ENCODE measurements at regions of chr2 and their contacts with region 1.

Region 1: GRCh38 chr2:105358593-105358992 is 21.3 kb downstream of the C2orf49 start:
- DNase-seq: no peak
- H3K4me3 ChIP-seq: no peak overlapping the region
- H3K27ac ChIP-seq: no peak overlapping the region
- H3K4me1 ChIP-seq: no peaks in the 10 kb centered on the region
- H3K27me3 ChIP-seq: no peaks in the 10 kb centered on the region
- CTCF ChIP-seq: no peak
- EP300 ChIP-seq: no peak
- POLR2A ChIP-seq: no peak
- RAD21 ChIP-seq: no peak

Region 2: DNA sequence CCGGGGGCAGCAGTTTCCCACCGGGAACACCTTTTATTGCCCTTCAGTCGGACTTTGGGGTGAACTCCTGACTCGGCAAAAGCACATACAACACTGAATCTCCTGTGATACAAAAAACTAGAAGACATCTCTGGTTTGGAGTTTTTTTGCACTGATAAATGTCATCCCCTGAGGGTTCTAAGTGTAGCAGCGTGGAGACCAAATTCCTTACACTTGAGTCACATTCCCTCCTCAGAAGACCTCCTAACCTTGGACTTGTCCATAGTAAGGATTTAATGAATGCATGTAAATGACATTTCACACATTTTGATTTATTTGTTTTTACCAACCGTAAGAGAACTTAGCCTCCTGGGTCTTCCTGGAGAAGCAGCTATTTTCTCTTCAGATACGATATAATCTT is 171.1 kb before region 1 on chr2:
- CTCF ChIA-PET with region 1: no interaction called
- POLR2A ChIA-PET with region 1: no interaction called
- DNase-seq: no peak
- H3K4me3 ChIP-seq: no peak overlapping the region
- H3K27ac ChIP-seq: no peak overlapping the region
- H3K4me1 ChIP-seq: no peaks in the 10 kb centered on the region; a peak in 1 of 7 replicates
- H3K27me3 ChIP-seq: no peaks in the 10 kb centered on the region; a peak in 1 of 7 replicates
- CTCF ChIP-seq: no peak
- EP300 ChIP-seq: no peak
- POLR2A ChIP-seq: no peak
- RAD21 ChIP-seq: no peak

Region 3: DNA sequence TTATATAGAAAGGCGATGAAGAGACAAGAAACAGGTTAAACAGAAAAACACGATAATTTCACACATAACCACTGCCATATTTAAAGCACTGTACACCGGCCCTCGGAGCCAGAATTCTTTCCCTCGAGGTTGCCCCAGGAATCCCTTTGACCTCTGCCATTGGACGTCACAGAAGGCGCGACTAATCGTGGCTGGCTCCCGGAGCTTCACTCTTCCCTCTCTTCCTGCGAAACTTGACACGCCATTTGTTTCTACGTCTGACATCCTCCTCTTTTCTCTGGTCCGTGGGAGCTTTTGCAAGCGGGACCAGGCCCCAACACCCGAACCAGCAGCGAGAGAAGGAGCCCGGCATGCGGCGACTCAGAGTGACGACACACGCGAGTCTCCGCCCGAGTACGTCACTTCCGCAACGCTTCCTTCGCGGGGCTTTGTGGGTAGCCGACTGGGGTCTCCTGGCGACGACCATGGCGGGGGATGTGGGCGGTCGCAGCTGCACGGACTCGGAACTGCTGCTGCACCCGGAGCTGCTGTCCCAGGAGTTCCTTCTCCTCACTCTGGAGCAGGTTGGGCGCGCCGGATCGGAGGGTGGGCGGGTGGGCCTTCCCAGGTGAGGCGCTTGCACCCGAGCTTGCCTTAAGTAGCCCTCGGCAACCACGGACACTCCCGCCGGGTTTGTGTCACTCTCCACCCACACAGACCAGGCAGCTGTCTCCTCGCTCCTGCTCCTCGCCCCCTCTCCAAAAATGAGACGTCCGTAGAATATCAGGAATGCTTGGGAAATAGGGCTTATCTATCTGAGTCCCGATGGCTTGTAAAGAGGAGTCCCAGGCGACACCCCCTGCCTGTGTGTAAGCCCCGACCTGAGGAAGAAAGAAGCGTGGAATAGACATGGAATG is 21.2 kb before region 1 on chr2 and contains the start of gene C2orf49:
- CTCF ChIA-PET with region 1: no interaction called
- POLR2A ChIA-PET with region 1: interaction called, 11 read pairs
- DNase-seq: peak; percentile 41 to 95
- H3K4me3 ChIP-seq: peak within 1 kb of the TSS; percentile 82 to 99 (median 96)
- H3K27ac ChIP-seq: peak within 1 kb of the TSS; percentile 100
- H3K4me1 ChIP-seq: peaks cover 0 to 5% (median 0%) of the 10 kb centered on the region in 4 experiments; a peak in 2 of 7 replicates
- H3K27me3 ChIP-seq: no peaks in the 10 kb centered on the region
- CTCF ChIP-seq: no peak
- EP300 ChIP-seq: no peak
- POLR2A ChIP-seq: peak; percentile 73 to 93
- RAD21 ChIP-seq: no peak
- total RNA-seq, gene C2orf49: 14.4 and 19.9 TPM in 2 replicates

Region 4: DNA sequence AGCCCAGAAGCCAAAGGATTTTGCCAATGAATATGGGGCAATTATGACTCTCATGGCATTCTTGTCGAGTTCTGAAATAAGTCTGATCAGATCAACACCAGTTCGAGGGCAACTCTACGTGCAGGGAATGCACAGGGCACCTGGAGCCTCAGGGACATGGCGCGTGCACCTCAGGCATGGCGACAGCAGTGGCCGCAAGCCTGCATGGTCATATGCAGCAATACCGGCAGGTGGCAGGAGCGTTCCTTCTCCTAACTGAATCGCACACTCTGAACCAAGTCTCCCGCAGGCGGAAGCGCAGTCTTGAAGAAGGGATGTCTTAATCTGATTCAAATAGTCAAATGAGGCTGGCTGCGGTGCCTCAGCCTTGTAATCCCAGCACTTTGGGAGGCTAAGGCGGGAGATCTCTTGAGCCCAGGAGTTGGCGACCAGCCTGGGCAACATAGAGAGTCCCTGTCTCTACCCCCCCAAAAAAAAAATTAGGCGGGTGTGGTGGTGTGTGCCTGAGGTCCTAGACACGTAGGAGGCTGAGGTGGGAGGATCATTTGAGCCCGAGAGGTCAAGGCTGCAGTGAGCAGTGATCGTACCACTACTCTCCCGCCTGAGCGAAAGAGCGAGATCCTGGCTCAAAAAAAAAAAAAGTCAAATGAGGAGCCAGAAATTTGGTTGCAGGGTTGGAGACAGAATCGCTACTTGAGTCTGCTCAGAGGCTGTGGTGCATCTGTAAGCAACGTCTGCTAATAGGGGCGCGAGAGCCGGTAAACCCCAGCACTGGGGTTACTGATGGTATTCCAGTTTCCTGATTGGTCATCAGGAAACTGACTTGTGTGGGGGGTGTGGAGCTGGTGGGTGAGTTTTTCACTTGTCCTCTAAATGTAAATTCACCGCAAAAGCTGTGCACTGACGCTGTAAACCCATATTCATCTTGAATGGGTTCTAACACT is 11.4 kb after region 1 on chr2:
- CTCF ChIA-PET with region 1: interaction called, 10 read pairs
- POLR2A ChIA-PET with region 1: interaction called, 3 read pairs
- DNase-seq: peak; percentile 75 to 89
- H3K4me3 ChIP-seq: no peak overlapping the region
- H3K27ac ChIP-seq: no peak overlapping the region
- H3K4me1 ChIP-seq: no peaks in the 10 kb centered on the region
- H3K27me3 ChIP-seq: no peaks in the 10 kb centered on the region
- CTCF ChIP-seq: peak; percentile 95 to 99 (median 98)
- EP300 ChIP-seq: no peak
- POLR2A ChIP-seq: no peak
- RAD21 ChIP-seq: peak; percentile 95 to 96

Measured in H1 (cell line).